Gastrocnemius medialis (tissue), 4 donors: ENCODE measurements at regions of chr5 and their contacts with region 1.

Region 1: GRCh38 chr5:157858527-157859226 is at the start of gene CLINT1:
- DNase-seq: peak; percentile 83 to 87
- ATAC-seq: peak; percentile 94
- H3K4me3 ChIP-seq: peak within 1 kb of the TSS; percentile 83 to 98 (median 94)
- H3K27ac ChIP-seq: peak within 1 kb of the TSS; percentile 93 to 97 (median 96)
- H3K4me1 ChIP-seq: peaks cover 16 to 23% of the 10 kb centered on the region in 2 donors
- H3K27me3 ChIP-seq: no peaks in the 10 kb centered on the region
- CTCF ChIP-seq: no peak
- POLR2A ChIP-seq: peak; percentile 70 to 71
- total RNA-seq, gene CLINT1: 77.4 to 124 (median 85.5) TPM

Region 2: GRCh38 chr5:157142317-157143126 is 716.2 kb before region 1 on chr5 and contains the start of gene MED7:
- in situ Hi-C with region 1: no loop called
- intact Hi-C with region 1: loop called (anchors 5 kb)
- DNase-seq: peak; percentile 95
- ATAC-seq: peak; percentile 98 to 100
- H3K4me3 ChIP-seq: peak within 1 kb of the TSS; percentile 68 to 96 (median 86)
- H3K27ac ChIP-seq: peak within 1 kb of the TSS; percentile 83 to 90 (median 89)
- H3K4me1 ChIP-seq: peaks cover 10% of the 10 kb centered on the region in 2 donors
- H3K27me3 ChIP-seq: no peaks in the 10 kb centered on the region
- CTCF ChIP-seq: no peak
- POLR2A ChIP-seq: peak; percentile 57 to 76
- total RNA-seq, gene MED7: 7.0 to 9.4 (median 8.5) TPM

Region 3: DNA sequence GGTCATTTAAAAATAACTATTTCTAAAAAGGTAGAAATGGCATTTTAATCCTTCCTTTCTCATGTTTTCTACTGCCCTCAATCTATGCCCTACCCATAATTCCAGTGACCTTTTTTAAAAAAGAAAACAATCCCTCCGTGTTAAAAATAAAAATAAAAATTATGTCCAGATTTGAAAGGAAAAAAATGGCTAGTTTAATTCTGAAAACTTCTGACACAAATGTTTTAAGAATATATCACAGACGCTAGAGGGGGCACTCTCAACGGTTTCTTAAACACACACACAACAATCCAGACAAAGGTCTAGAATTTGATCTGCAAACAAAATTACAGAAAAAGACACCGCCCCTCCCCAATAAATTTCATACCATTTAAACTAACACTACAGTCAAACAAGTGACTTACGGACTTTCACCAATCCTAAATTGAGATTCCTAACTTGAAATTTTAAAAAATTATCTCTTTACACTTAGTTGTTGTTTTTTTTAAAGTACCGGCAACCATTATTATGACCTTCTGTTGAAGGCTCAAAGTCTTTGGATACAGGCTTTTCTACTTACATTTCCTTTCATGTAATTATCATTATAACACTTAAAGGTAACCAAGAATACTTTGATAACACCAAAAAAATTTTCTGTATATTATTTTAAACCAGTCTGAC is 38.0 kb before region 1 on chr5:
- in situ Hi-C with region 1: no loop called
- intact Hi-C with region 1: loop called (anchors 2 kb)
- DNase-seq: no peak
- ATAC-seq: no peak
- H3K4me3 ChIP-seq: no peak overlapping the region
- H3K27ac ChIP-seq: peak overlapping the region; percentile 39 to 55 (median 46)
- H3K4me1 ChIP-seq: peaks cover 34 to 41% of the 10 kb centered on the region in 2 donors
- H3K27me3 ChIP-seq: no peaks in the 10 kb centered on the region
- CTCF ChIP-seq: peak in 3 of 5 experiments; percentile 28 to 54 (median 44)
- POLR2A ChIP-seq: no peak

Region 4: GRCh38 chr5:157948738-157949410 is 90.2 kb after region 1 on chr5:
- in situ Hi-C with region 1: no loop called
- intact Hi-C with region 1: loop called (anchors 2 kb)
- DNase-seq: peak; percentile 59 to 77
- ATAC-seq: peak; percentile 98 to 99
- H3K4me3 ChIP-seq: peak overlapping the region in 1 of 4 donors; percentile 23
- H3K27ac ChIP-seq: no peak overlapping the region
- H3K4me1 ChIP-seq: peaks cover 3 to 5% of the 10 kb centered on the region in 2 donors
- H3K27me3 ChIP-seq: no peaks in the 10 kb centered on the region
- CTCF ChIP-seq: peak; percentile 51 to 87 (median 77)
- POLR2A ChIP-seq: no peak

Region 5: DNA sequence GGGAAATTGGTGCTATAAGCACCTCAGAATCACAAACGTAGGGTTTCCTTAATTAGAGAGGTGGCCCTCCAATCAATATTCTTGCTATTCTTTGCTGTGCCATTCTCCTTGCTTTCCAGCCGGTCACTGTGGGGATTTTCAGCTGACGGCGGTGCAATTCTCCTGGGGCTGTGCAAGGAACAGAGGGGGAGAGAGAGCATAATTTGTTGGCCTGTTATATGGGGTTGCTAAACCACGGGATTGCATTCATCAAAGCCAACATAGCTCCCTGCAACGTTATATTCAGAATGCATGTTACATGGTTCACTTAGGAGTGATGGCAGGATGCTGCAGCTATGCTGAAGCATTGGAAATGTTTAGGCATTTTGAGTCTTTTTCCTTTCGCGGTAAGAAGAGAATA is 441.6 kb after region 1 on chr5:
- in situ Hi-C with region 1: no loop called
- intact Hi-C with region 1: no loop called
- DNase-seq: no peak
- ATAC-seq: no peak
- H3K4me3 ChIP-seq: no peak overlapping the region
- H3K27ac ChIP-seq: no peak overlapping the region
- H3K4me1 ChIP-seq: no peaks in the 10 kb centered on the region
- H3K27me3 ChIP-seq: no peaks in the 10 kb centered on the region
- CTCF ChIP-seq: no peak
- POLR2A ChIP-seq: no peak